K562 (cell line): ENCODE measurements at regions of chr3 and their contacts with region 1.

Region 1: GRCh38 chr3:37855363-37855970 is 6.2 kb upstream of the CTDSPL start:
- DNase-seq: peak; percentile 80 to 86 (median 83)
- ATAC-seq: peak; percentile 83
- H3K4me3 ChIP-seq: no peak overlapping the region
- H3K27ac ChIP-seq: no peak overlapping the region
- H3K4me1 ChIP-seq: peaks cover 8 to 15% of the 10 kb centered on the region in 2 experiments
- H3K27me3 ChIP-seq: no peaks in the 10 kb centered on the region; a peak in 1 of 5 replicates
- CTCF ChIP-seq: peak; percentile 95 to 98 (median 97)
- EP300 ChIP-seq: no peak
- POLR2A ChIP-seq: no peak
- RAD21 ChIP-seq: peak; percentile 97 to 99

Region 2: GRCh38 chr3:37912052-37912733 is 56.7 kb after region 1 on chr3:
- CTCF ChIA-PET with region 1: interaction called, 3 read pairs
- POLR2A ChIA-PET with region 1: interaction called, 3 read pairs
- in situ Hi-C with region 1: no loop called
- intact Hi-C with region 1: loop called (anchors 1 kb)
- DNase-seq: peak in 2 of 4 experiments; percentile 25 to 43
- ATAC-seq: peak; percentile 90
- H3K4me3 ChIP-seq: no peak overlapping the region
- H3K27ac ChIP-seq: no peak overlapping the region
- H3K4me1 ChIP-seq: no peaks in the 10 kb centered on the region
- H3K27me3 ChIP-seq: peaks cover 0 to 14% of the 10 kb centered on the region in 2 experiments; a peak in 3 of 5 replicates
- CTCF ChIP-seq: peak; percentile 48 to 60 (median 52); a peak in 5 of 6 replicates
- EP300 ChIP-seq: no peak
- POLR2A ChIP-seq: no peak
- RAD21 ChIP-seq: peak in 1 of 2 experiments; percentile 67; a peak in 2 of 4 replicates

Region 3: DNA sequence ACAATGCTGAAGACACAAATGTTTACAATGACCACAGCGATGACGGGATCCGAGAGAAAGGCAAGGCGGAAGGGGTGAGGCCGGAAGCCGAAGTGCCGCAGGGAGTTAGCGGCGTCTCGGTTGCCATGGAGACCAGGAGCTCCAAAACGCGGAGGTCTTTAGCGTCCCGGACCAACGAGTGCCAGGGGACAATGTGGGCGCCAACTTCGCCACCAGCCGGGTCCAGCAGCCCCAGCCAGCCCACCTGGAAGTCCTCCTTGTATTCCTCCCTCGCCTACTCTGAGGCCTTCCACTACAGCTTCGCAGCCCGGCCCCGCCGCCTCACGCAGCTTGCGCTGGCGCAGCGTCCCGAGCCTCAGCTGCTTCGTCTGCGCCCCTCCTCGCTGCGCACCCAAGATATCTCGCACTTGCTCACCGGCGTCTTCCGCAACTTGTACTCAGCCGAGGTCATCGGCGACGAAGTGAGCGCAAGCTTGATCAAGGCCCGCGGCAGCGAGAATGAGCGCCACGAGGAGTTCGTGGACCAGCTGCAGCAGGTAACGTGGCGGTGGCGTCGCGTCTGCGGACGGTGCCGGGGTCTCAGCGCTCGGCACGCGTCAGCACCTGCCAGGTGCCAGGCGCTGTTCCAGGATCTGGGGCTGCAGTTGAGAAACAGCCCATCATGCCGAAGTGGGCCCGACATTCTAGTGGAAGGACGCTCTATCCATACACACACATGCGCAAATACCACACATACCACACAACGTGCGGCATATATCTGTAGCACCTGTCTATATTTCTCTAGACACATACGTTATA is 183.8 kb after region 1 on chr3 and contains the start of gene DLEC1:
- CTCF ChIA-PET with region 1: no interaction called
- POLR2A ChIA-PET with region 1: no interaction called
- in situ Hi-C with region 1: no loop called
- intact Hi-C with region 1: no loop called
- DNase-seq: peak in 2 of 4 experiments; percentile 56 to 61
- ATAC-seq: peak; percentile 51
- H3K4me3 ChIP-seq: no peak within 1 kb of the TSS
- H3K27ac ChIP-seq: no peak within 1 kb of the TSS
- H3K4me1 ChIP-seq: peaks cover 4 to 9% of the 10 kb centered on the region in 2 experiments; a peak in 4 of 5 replicates
- H3K27me3 ChIP-seq: peaks cover 13 to 41% of the 10 kb centered on the region in 2 experiments; a peak in 4 of 5 replicates
- CTCF ChIP-seq: no peak
- EP300 ChIP-seq: no peak
- POLR2A ChIP-seq: no peak
- RAD21 ChIP-seq: no peak
- polyA plus RNA-seq, gene DLEC1: 0.07 to 0.08 TPM